ENCODE measurements at regions of chr1 and their contacts with region 1.

Region 1: DNA sequence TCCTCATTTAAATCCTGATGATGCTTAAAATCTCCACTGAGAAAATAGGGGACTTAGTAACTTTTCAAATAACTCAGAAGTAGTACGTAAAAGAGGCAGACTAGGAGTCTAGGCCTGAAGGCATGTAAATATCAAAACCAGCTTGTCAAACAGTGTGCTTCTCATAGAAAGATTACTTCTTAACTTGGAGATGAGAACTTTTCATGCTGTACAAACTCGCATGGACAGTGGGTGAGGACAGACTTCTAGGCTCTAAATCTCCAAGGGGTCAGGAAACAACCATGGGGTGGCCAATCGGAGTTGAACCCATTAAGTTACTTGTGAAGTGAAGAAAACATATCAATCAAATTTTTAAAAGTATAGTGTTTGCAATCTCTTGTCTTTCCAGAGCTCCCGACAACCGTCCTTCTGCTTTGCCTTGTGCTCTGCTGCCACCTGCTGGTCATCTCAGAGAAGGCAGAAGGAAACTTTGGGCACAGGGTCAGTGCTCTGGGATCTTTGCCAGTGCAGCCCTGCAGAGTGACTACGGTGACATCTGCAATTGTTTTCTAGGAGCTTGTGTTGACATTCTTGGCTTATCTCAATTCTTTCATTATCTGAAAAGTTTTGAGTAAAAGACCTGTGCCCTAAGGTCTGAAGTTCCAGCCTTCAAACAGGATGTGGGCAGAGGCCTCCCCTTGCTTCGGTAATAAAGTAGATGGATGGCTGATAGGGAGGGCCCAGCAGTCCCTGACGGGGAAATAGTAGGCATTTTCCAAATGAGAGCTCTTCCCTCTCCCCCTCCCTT is 105.1 kb upstream of the PDE4B start:
- DNase-seq: peak; percentile 62
- H3K4me3 Mint-ChIP-seq: no peak overlapping the region
- H3K27ac Mint-ChIP-seq: no peak overlapping the region
- H3K4me1 Mint-ChIP-seq: peaks cover 14% of the 10 kb centered on the region
- H3K27me3 Mint-ChIP-seq: peaks cover 22% of the 10 kb centered on the region

Region 2: DNA sequence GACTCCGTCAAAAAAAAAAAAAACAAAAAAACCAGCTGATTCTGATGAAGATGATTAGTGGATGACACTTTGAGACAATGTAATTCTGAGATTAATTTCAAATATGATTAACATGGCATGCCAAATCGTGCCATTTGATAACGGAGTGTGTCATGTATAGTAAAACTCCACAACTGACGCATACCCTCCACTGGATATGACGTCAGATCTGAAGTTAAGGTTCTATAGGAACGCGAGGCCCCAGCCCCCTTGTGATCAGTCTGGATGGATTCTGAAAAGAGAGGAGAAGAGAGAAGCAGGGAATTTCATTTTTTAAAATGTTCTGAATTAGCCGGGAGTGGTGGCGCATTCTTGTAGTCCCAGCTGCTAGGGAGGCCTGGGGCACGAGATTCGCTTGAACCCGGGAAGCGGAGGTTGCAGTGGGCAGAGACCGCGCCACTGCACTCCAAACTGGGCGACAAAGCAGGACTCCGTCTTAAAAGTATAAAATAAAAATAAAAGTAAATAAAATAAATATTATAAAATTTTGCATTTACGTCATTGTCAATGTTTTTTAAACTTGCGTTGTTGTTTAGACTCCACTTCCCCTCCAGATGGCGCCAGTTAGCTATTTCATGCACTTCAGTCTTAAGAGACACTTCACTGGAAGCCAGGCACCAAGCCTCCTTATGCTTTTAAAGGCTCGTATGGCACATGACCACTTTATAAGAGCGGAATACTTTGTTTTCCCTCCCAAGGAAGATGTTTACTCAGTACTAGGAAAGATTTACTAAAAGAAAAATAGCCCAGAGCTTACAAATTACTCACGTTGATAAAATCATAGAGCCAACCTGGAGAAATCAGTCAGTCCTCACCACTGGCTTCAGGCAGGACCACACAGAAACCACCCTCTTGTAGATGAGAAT is 1418.7 kb before region 1 on chr1:
- intact Hi-C with region 1: loop called (anchors 1 kb)
- DNase-seq: peak; percentile 25
- H3K4me3 Mint-ChIP-seq: no peak overlapping the region
- H3K27ac Mint-ChIP-seq: no peak overlapping the region
- H3K4me1 Mint-ChIP-seq: no peaks in the 10 kb centered on the region
- H3K27me3 Mint-ChIP-seq: peaks cover 5% of the 10 kb centered on the region

Region 3: GRCh38 chr1:65059930-65060538 is 627.6 kb before region 1 on chr1:
- intact Hi-C with region 1: loop called (anchors 1 kb)
- DNase-seq: no peak
- H3K4me3 Mint-ChIP-seq: no peak overlapping the region
- H3K27ac Mint-ChIP-seq: no peak overlapping the region
- H3K4me1 Mint-ChIP-seq: peaks cover 17% of the 10 kb centered on the region
- H3K27me3 Mint-ChIP-seq: no peaks in the 10 kb centered on the region

Region 4: GRCh38 chr1:65214340-65215027 is 473.1 kb before region 1 on chr1:
- intact Hi-C with region 1: loop called (anchors 1 kb)
- DNase-seq: no peak
- H3K4me3 Mint-ChIP-seq: peak overlapping the region; percentile 17
- H3K27ac Mint-ChIP-seq: peak overlapping the region; percentile 86
- H3K4me1 Mint-ChIP-seq: peaks cover 66% of the 10 kb centered on the region
- H3K27me3 Mint-ChIP-seq: no peaks in the 10 kb centered on the region

Region 5: DNA sequence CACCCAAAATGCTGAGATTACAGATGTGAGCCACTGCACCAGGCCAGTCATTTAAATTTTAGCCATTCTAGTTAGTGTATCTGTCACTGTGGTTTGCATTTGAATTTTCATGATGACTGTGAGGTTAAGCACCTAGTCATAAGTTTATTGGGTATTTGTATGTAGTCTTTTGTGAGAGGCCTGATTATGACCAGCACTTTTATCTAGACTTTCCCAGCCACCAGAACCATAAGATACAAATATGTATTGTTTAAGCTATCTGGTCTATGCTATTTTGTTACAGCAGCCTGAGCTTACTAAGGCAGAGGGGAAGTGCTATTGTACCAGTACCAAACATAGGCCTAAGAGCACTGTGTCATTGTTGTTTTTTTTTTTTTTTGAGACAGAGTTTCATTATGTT is 398.2 kb before region 1 on chr1:
- intact Hi-C with region 1: no loop called
- DNase-seq: no peak
- H3K4me3 Mint-ChIP-seq: no peak overlapping the region
- H3K27ac Mint-ChIP-seq: no peak overlapping the region
- H3K4me1 Mint-ChIP-seq: peaks cover 4% of the 10 kb centered on the region
- H3K27me3 Mint-ChIP-seq: no peaks in the 10 kb centered on the region

Region 6: DNA sequence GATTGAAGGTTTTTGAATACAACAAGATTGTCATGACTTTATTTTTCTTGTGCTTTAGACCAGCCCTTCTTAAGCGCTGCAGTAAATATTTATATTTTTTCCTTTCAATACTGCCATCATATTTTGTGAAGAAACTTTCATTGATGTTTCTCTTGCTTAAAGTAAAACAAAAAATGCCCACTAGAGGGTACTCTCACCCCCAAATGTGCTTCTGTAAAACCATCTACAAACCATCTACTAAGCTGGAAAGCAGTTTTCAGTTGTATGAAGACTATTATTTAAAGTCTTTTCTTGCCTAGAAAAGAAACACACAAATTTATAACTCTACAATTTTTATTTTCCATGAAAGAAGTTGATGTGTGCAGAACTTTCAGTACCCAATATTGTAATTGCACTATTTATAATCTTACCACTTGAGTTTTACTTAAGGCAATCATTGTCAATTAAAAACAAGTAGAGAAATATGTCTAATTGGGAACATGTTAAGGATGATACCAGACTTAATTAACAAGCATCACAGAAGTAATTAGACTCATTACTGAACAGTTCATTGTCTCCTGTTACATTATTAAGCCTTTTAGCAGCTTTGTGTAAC is 256.4 kb before region 1 on chr1:
- intact Hi-C with region 1: loop called (anchors 1 kb)
- DNase-seq: no peak
- H3K4me3 Mint-ChIP-seq: no peak overlapping the region
- H3K27ac Mint-ChIP-seq: no peak overlapping the region
- H3K4me1 Mint-ChIP-seq: peaks cover 30% of the 10 kb centered on the region
- H3K27me3 Mint-ChIP-seq: no peaks in the 10 kb centered on the region